GM12878 (cell line): ENCODE measurements at regions of chr16 and their contacts with region 1.

Region 1: DNA sequence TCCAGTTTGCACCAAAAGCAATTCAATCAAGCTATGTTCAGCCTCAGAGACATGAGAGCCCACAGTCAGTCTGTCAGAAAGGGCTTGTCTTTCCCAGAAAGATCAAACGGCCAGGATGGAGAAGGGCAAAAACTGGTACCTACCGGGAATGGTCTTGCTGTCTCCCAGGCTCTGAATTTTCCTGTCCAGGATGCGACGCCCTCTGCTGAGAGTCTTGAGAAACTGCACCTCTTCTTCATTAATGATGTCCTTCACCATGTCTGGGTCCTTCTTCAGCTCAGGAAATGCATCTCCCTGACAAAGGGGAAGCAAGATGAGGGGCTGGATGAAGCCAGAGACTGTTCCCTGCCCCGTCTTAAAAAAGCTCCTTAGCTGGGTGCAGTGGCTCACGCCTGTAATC is 15.8 kb upstream of the EXOSC6 start:
- DNase-seq: no peak
- ATAC-seq: peak; percentile 67
- H3K4me3 ChIP-seq: no peak overlapping the region
- H3K27ac ChIP-seq: no peak overlapping the region
- H3K4me1 ChIP-seq: no peaks in the 10 kb centered on the region
- H3K27me3 ChIP-seq: no peaks in the 10 kb centered on the region
- CTCF ChIP-seq: peak; percentile 49 to 62 (median 58)
- EP300 ChIP-seq: no peak
- POLR2A ChIP-seq: no peak
- RAD21 ChIP-seq: peak; percentile 38; the same call in 1 of the 2 replicates

Region 2: DNA sequence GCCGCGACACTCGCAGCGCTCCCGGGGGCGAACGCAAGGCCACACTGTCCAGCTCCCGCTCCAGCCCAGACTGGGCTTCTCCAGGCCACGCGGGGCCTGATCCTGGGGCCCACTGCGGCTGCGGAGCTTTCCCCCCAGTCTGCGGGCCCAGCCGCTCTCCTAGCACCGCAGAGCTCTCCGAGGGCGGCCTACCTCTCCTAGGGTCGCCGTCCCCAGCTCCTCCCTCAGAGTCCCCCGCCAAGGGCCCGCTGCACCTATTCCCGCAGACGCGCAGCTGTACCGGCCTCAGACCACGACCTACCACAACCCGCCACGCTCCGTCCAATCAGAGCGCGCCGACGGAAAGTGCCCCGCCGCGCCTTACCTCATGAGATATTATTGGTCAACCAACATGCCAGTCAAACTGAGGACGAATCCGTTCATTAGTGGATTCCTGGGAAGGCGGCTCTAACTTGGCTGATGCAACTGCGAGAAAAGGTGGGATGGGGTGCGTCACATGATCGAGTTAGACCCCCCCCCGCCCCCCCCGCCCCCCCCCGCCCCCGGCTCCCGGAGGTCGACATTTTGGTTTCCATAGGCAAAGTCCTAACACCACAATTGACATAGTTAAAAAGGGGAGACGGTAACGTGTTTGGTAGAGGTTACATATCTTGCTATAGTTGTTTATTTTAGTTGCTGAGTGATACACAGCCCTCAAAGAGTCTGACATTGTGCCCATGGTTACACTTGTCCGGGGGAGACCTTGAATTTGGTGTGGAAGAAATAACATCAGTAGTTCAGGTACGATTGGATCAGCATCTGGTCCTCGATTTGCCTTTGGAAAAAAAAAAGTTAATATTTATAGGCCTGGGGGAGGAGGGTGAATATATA is 21.9 kb after region 1 on chr16 and contains the start of gene AARS1:
- CTCF ChIA-PET with region 1: interaction called, 10 read pairs
- POLR2A ChIA-PET with region 1: interaction called, 6 read pairs
- RAD21 ChIA-PET with region 1: interaction called, 3 read pairs
- SMC1A ChIA-PET with region 1: interaction called, 3 read pairs
- in situ Hi-C with region 1: no loop called
- intact Hi-C with region 1: no loop called
- DNase-seq: peak; percentile 98
- ATAC-seq: peak; percentile 99
- H3K4me3 ChIP-seq: peak within 1 kb of the TSS; percentile 100
- H3K27ac ChIP-seq: peak within 1 kb of the TSS; percentile 89
- H3K4me1 ChIP-seq: peaks cover 7% of the 10 kb centered on the region
- H3K27me3 ChIP-seq: no peaks in the 10 kb centered on the region
- CTCF ChIP-seq: no peak
- EP300 ChIP-seq: no peak
- POLR2A ChIP-seq: peak; percentile 97
- RAD21 ChIP-seq: no peak
- polyA plus RNA-seq, gene AARS1: 21.5 to 47.7 TPM

Region 3: GRCh38 chr16:70416748-70417616 is 149.5 kb after region 1 on chr16:
- CTCF ChIA-PET with region 1: no interaction called
- POLR2A ChIA-PET with region 1: no interaction called
- RAD21 ChIA-PET with region 1: no interaction called
- SMC1A ChIA-PET with region 1: no interaction called
- in situ Hi-C with region 1: no loop called
- intact Hi-C with region 1: no loop called
- DNase-seq: no peak
- ATAC-seq: peak; percentile 95
- H3K4me3 ChIP-seq: no peak overlapping the region
- H3K27ac ChIP-seq: peak overlapping the region; percentile 87
- H3K4me1 ChIP-seq: peaks cover 50% of the 10 kb centered on the region
- H3K27me3 ChIP-seq: no peaks in the 10 kb centered on the region
- CTCF ChIP-seq: no peak
- EP300 ChIP-seq: peak; percentile 60 to 69; a peak in 2 of 4 replicates
- POLR2A ChIP-seq: 0 out of 2 replicates have a peak, but pooled peaks have one; percentile 20
- RAD21 ChIP-seq: no peak

Region 4: DNA sequence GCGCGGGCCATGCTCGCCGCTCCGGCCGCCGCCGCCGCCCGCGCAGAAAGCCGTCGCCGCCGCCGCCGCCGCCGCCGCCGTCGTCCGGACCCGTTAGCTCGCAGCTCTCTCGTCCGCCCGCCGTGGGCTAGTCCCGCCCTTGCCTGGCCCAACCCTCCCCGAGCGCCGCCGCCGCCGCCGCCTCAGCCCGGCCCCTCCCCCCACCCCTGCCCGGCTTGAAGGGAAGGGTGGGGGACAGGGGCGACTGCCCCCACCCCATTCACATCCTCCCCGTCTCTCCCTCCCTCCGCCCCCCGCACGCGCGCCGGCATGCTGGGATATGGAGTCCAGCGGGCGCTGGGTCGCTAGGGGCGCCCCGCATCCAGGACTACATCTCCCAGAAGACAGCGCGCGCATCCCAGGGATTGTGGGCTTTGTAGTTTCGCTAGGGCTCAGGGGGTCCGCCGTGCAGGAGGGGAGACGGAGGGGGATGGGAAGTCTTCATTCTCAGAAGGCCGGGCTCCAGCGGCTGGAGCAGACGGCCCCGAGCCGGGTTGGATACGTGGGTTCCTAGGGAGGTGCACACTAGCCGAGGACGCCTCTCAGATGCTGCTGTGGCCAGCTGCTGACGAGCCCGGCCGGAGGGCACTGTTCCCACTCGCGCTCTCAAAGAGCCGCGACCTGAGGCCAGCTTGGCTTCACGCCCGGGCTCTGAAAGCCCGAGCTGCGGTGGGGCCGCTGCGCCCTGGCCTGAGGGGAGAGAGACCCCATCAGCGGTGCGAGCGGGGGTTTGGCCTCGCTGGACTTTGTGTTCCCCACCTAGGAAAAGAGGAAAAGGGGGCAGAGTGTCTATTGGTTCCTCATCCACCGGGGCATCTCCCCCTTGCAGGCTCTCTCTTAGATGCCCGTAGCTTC is 171.7 kb after region 1 on chr16 and contains the start of gene ST3GAL2:
- CTCF ChIA-PET with region 1: no interaction called
- POLR2A ChIA-PET with region 1: no interaction called
- RAD21 ChIA-PET with region 1: no interaction called
- SMC1A ChIA-PET with region 1: no interaction called
- in situ Hi-C with region 1: no loop called
- intact Hi-C with region 1: no loop called
- DNase-seq: peak; percentile 74
- ATAC-seq: peak; percentile 91
- H3K4me3 ChIP-seq: peak within 1 kb of the TSS; percentile 88
- H3K27ac ChIP-seq: peak within 1 kb of the TSS; percentile 71
- H3K4me1 ChIP-seq: peaks cover 20% of the 10 kb centered on the region
- H3K27me3 ChIP-seq: no peaks in the 10 kb centered on the region
- CTCF ChIP-seq: 0 out of 6 replicates have a peak, but pooled peaks of 1 of the 3 experiments have one; percentile 2
- EP300 ChIP-seq: no peak
- POLR2A ChIP-seq: peak; percentile 67
- RAD21 ChIP-seq: no peak
- polyA plus RNA-seq, gene ST3GAL2: 0.95 to 1.4 TPM

Region 5: DNA sequence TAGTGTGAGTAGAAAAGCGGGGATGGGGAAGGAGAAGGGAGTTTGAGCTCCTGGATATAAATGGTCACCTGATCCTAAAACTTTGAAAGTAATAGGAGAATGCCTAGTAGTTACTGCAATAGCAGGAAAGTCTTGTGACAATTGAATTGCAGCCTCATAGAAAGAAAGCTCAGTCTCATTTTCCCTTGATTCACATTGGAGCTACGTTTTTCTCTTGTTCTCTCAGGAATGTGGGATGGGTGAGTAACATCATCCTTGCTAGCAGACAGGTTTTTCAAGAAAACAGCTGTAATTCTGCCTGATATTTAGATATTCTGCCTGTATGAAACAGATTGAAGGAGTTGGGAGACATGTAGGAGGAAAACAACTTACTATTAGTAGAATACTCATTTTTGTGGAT is 281.4 kb after region 1 on chr16:
- CTCF ChIA-PET with region 1: no interaction called
- POLR2A ChIA-PET with region 1: no interaction called
- RAD21 ChIA-PET with region 1: no interaction called
- SMC1A ChIA-PET with region 1: no interaction called
- in situ Hi-C with region 1: loop called (anchors 5 kb)
- intact Hi-C with region 1: no loop called
- DNase-seq: no peak
- ATAC-seq: no peak
- H3K4me3 ChIP-seq: no peak overlapping the region
- H3K27ac ChIP-seq: no peak overlapping the region
- H3K4me1 ChIP-seq: no peaks in the 10 kb centered on the region
- H3K27me3 ChIP-seq: no peaks in the 10 kb centered on the region
- CTCF ChIP-seq: no peak
- EP300 ChIP-seq: no peak
- POLR2A ChIP-seq: no peak
- RAD21 ChIP-seq: no peak